CD8-positive, alpha-beta T cell (primary cell): ENCODE measurements at regions of chr12 and their contacts with region 1.

Region 1: DNA sequence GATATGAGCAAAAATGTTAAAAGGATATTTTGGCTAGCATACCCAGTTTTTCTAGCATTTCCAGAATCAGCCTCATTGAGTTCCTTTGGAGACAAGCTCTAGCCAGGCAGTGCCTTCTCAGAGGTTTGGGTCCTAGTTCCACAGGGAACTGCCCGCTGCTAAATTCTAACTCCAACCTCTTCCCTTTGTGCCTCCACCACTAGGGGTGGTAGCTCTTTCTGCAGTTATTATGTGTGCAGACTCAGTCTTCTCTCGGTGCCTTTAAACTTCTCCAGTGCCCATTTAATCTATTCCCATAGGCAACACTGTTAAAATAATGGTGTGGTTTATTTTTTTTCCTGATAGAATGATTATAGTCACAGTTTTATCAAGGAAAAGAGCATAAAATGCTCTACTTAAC is 21.5 kb upstream of the SLC25A3 start:
- DNase-seq: no peak
- ATAC-seq: no peak
- H3K4me3 ChIP-seq: no peak overlapping the region
- H3K4me3 Mint-ChIP-seq: no peak overlapping the region
- H3K27ac ChIP-seq: no peak overlapping the region
- H3K27ac Mint-ChIP-seq: no peak overlapping the region
- H3K4me1 ChIP-seq: no peaks in the 10 kb centered on the region
- H3K4me1 Mint-ChIP-seq: no peaks in the 10 kb centered on the region
- H3K27me3 ChIP-seq: no peaks in the 10 kb centered on the region
- H3K27me3 Mint-ChIP-seq: no peaks in the 10 kb centered on the region
- CTCF ChIP-seq: no peak

Region 2: DNA sequence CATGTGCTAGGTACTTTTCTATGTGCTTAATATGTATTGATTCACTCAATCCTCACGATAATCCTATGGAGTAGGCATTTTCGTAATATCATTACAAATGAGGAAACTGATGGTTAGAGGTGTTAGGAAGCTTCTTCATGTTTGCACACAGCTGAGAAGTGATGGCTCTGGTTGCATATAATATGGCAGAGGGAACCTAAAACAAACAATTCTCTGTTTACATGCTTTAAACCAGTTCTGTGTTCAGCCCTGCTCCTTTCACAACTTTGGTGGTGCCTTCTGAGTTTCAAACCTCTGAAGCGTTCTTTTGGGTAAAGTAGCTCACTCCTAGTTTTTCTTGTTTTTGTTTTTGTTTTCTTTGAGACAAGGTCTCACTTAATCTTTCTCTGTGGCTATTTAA is 21.2 kb before region 1 on chr12:
- CTCF ChIA-PET with region 1: interaction called, 5 read pairs
- POLR2A ChIA-PET with region 1: interaction called, 11 read pairs
- intact Hi-C with region 1: no loop called
- DNase-seq: no peak
- ATAC-seq: no peak
- H3K4me3 ChIP-seq: no peak overlapping the region
- H3K4me3 Mint-ChIP-seq: no peak overlapping the region
- H3K27ac ChIP-seq: no peak overlapping the region
- H3K27ac Mint-ChIP-seq: peak overlapping the region; percentile 0
- H3K4me1 ChIP-seq: no peaks in the 10 kb centered on the region
- H3K4me1 Mint-ChIP-seq: no peaks in the 10 kb centered on the region
- H3K27me3 ChIP-seq: no peaks in the 10 kb centered on the region
- H3K27me3 Mint-ChIP-seq: no peaks in the 10 kb centered on the region
- CTCF ChIP-seq: no peak

Region 3: GRCh38 chr12:98582093-98582492 is 10.1 kb after region 1 on chr12:
- CTCF ChIA-PET with region 1: interaction called, 10 read pairs
- POLR2A ChIA-PET with region 1: no interaction called
- intact Hi-C with region 1: no loop called
- DNase-seq: no peak
- ATAC-seq: no peak
- H3K4me3 ChIP-seq: no peak overlapping the region
- H3K4me3 Mint-ChIP-seq: no peak overlapping the region
- H3K27ac ChIP-seq: no peak overlapping the region
- H3K27ac Mint-ChIP-seq: no peak overlapping the region
- H3K4me1 ChIP-seq: no peaks in the 10 kb centered on the region
- H3K4me1 Mint-ChIP-seq: no peaks in the 10 kb centered on the region
- H3K27me3 ChIP-seq: no peaks in the 10 kb centered on the region
- H3K27me3 Mint-ChIP-seq: no peaks in the 10 kb centered on the region
- CTCF ChIP-seq: no peak

Region 4: GRCh38 chr12:98653866-98654493 is 82.0 kb after region 1 on chr12:
- CTCF ChIA-PET with region 1: interaction called, 93 read pairs
- POLR2A ChIA-PET with region 1: interaction called, 5 read pairs
- intact Hi-C with region 1: loop called in 1 of 2 experiments (anchors 1 kb)
- DNase-seq: peak in 2 of 9 experiments; percentile 65 to 76
- ATAC-seq: peak; percentile 57
- H3K4me3 ChIP-seq: no peak overlapping the region
- H3K4me3 Mint-ChIP-seq: no peak overlapping the region
- H3K27ac ChIP-seq: no peak overlapping the region
- H3K27ac Mint-ChIP-seq: no peak overlapping the region
- H3K4me1 ChIP-seq: no peaks in the 10 kb centered on the region
- H3K4me1 Mint-ChIP-seq: peaks cover 9% of the 10 kb centered on the region
- H3K27me3 ChIP-seq: no peaks in the 10 kb centered on the region
- H3K27me3 Mint-ChIP-seq: no peaks in the 10 kb centered on the region
- CTCF ChIP-seq: peak; percentile 84

Region 5: GRCh38 chr12:98799146-98799810 is 227.3 kb after region 1 on chr12:
- CTCF ChIA-PET with region 1: no interaction called
- POLR2A ChIA-PET with region 1: no interaction called
- intact Hi-C with region 1: no loop called
- DNase-seq: no peak
- ATAC-seq: no peak
- H3K4me3 ChIP-seq: no peak overlapping the region
- H3K4me3 Mint-ChIP-seq: no peak overlapping the region
- H3K27ac ChIP-seq: no peak overlapping the region
- H3K27ac Mint-ChIP-seq: no peak overlapping the region
- H3K4me1 ChIP-seq: no peaks in the 10 kb centered on the region
- H3K4me1 Mint-ChIP-seq: no peaks in the 10 kb centered on the region
- H3K27me3 ChIP-seq: no peaks in the 10 kb centered on the region
- H3K27me3 Mint-ChIP-seq: peaks cover 15% of the 10 kb centered on the region
- CTCF ChIP-seq: no peak